Left colon (tissue), 2 donors: ENCODE measurements at regions of chr1 and their contacts with region 1.

Region 1: DNA sequence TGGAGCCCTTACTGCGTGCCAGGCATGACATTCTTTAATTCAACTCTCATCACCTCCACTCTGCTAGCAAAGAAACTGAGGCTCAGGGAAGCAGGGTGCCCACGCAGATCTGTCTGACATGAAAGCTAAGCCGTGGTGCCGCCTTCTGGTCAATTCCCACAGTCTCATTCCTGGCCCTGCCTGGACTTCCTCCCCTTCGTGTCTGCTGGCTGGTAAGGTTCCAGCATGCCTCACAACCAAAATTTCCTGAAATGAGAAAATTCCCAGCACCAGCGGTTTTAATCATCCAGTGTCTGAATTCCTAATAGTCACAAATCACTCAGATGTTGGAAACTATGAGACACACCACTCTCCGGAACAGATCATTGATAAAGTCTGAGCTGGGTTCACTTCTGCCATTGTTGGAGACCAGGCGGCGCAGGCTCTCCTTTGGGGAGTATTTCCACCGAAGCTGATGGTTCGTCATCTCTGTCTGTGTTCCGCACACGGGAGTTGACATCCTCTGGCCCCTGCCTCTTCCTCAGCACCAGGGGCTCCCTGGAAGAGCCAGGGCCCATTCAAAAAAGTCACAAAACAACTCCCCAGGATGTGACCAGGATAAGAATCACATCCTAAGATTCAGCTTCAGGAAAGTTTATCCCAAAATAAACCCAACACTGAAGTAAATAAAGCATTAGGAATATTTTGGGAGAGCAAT is 167.7 kb downstream of the PLPP3 start:
- DNase-seq: no peak
- ATAC-seq: no peak

Region 2: GRCh38 chr1:56550138-56550858 is 138.7 kb after region 1 on chr1:
- intact Hi-C with region 1: loop called in 1 of 2 experiments (anchors 10 kb)
- DNase-seq: no peak
- ATAC-seq: no peak